ENCODE measurements at regions of chr2 and their contacts with region 1.

Region 1: GRCh38 chr2:151459358-151459757 is 49.7 kb downstream of the RIF1 start:
- DNase-seq: no peak
- H3K4me3 ChIP-seq: no peak overlapping the region
- H3K27ac ChIP-seq: no peak overlapping the region
- H3K4me1 ChIP-seq: no peaks in the 10 kb centered on the region
- H3K27me3 ChIP-seq: no peaks in the 10 kb centered on the region
- CTCF ChIP-seq: no peak
- EP300 ChIP-seq: no peak
- POLR2A ChIP-seq: no peak

Region 2: GRCh38 chr2:151189125-151189524 is 270.2 kb before region 1 on chr2:
- in situ Hi-C with region 1: no loop called
- intact Hi-C with region 1: no loop called
- DNase-seq: no peak
- H3K4me3 ChIP-seq: no peak overlapping the region
- H3K27ac ChIP-seq: no peak overlapping the region
- H3K4me1 ChIP-seq: no peaks in the 10 kb centered on the region
- H3K27me3 ChIP-seq: no peaks in the 10 kb centered on the region
- CTCF ChIP-seq: no peak
- EP300 ChIP-seq: no peak
- POLR2A ChIP-seq: no peak

Region 3: DNA sequence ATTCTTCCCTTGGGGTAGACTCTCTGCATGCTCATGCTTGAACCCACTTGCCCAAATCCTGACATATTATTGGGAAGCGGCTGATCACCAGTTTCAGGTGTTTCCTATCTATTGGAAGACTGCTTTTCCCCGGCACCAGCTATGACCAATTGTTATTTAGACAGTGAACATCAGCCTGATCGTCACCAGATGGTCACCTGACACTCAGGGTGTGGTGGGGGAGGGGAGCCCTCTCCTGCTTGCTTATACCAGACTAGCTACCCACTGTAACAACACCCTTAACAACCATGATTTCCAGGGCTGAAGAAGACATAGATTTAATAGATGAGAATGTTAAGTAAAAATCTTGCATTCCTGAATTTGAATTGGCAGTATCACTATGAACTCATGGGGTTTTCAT is 242.0 kb before region 1 on chr2:
- in situ Hi-C with region 1: no loop called
- intact Hi-C with region 1: no loop called
- DNase-seq: no peak
- H3K4me3 ChIP-seq: no peak overlapping the region
- H3K27ac ChIP-seq: no peak overlapping the region
- H3K4me1 ChIP-seq: no peaks in the 10 kb centered on the region
- H3K27me3 ChIP-seq: no peaks in the 10 kb centered on the region
- CTCF ChIP-seq: no peak
- EP300 ChIP-seq: no peak
- POLR2A ChIP-seq: no peak

Region 4: GRCh38 chr2:152657043-152657442 is 1197.7 kb after region 1 on chr2:
- in situ Hi-C with region 1: loop called in 2 of 4 experiments (anchors 25 kb)
- intact Hi-C with region 1: no loop called
- DNase-seq: no peak
- H3K4me3 ChIP-seq: no peak overlapping the region
- H3K27ac ChIP-seq: no peak overlapping the region
- H3K4me1 ChIP-seq: no peaks in the 10 kb centered on the region
- H3K27me3 ChIP-seq: no peaks in the 10 kb centered on the region
- CTCF ChIP-seq: no peak
- EP300 ChIP-seq: no peak
- POLR2A ChIP-seq: no peak

Region 5: GRCh38 chr2:152694161-152694661 is 1234.9 kb after region 1 on chr2:
- in situ Hi-C with region 1: loop called in 1 of 4 experiments (anchors 25 kb)
- intact Hi-C with region 1: no loop called
- DNase-seq: no peak
- H3K4me3 ChIP-seq: peak overlapping the region in 3 of 4 donors; percentile 10 to 15 (median 14)
- H3K27ac ChIP-seq: peak overlapping the region; percentile 11 to 56 (median 29)
- H3K4me1 ChIP-seq: peaks cover 0 to 17% (median 10%) of the 10 kb centered on the region in 4 donors
- H3K27me3 ChIP-seq: no peaks in the 10 kb centered on the region
- CTCF ChIP-seq: no peak
- EP300 ChIP-seq: no peak
- POLR2A ChIP-seq: no peak